ENCODE measurements at regions of chr22 and their contacts with region 1.

Region 1: GRCh38 chr22:38540701-38541100 is 29.3 kb downstream of the DMC1 start:
- DNase-seq: no peak
- H3K4me3 ChIP-seq: no peak overlapping the region
- H3K27ac ChIP-seq: no peak overlapping the region
- H3K4me1 ChIP-seq: no peaks in the 10 kb centered on the region
- H3K27me3 ChIP-seq: no peaks in the 10 kb centered on the region
- CTCF ChIP-seq: no peak
- EP300 ChIP-seq: no peak
- POLR2A ChIP-seq: no peak

Region 2: GRCh38 chr22:38429499-38430068 is 111.1 kb before region 1 on chr22:
- intact Hi-C with region 1: loop called (anchors 5 kb)
- DNase-seq: no peak
- H3K4me3 ChIP-seq: no peak overlapping the region
- H3K27ac ChIP-seq: no peak overlapping the region
- H3K4me1 ChIP-seq: no peaks in the 10 kb centered on the region
- H3K27me3 ChIP-seq: no peaks in the 10 kb centered on the region
- CTCF ChIP-seq: no peak
- EP300 ChIP-seq: no peak
- POLR2A ChIP-seq: no peak